ENCODE measurements at regions of chr13 and their contacts with region 1.

Region 1: GRCh38 chr13:44988973-44989817 is at the starts of genes GPALPP1 and NUFIP1:
- DNase-seq: peak; percentile 79 to 96 (median 89)
- ATAC-seq: peak; percentile 98
- H3K4me3 ChIP-seq: peak within 1 kb of the TSS; percentile 83
- H3K4me3 Mint-ChIP-seq: peak within 1 kb of the TSS; percentile 99
- H3K27ac ChIP-seq: peak within 1 kb of the TSS; percentile 75 to 87
- H3K27ac Mint-ChIP-seq: peak within 1 kb of the TSS; percentile 92
- H3K4me1 ChIP-seq: peaks cover 30% of the 10 kb centered on the region
- H3K4me1 Mint-ChIP-seq: peaks cover 65% of the 10 kb centered on the region
- H3K27me3 ChIP-seq: no peaks in the 10 kb centered on the region
- H3K27me3 Mint-ChIP-seq: no peaks in the 10 kb centered on the region
- CTCF ChIP-seq: no peak
- total RNA-seq, gene GPALPP1: 18.9 to 20.8 TPM
- total RNA-seq, gene NUFIP1: 4.3 to 4.4 TPM

Region 2: GRCh38 chr13:44141725-44142539 is 847.3 kb before region 1 on chr13:
- CTCF ChIA-PET with region 1: no interaction called
- POLR2A ChIA-PET with region 1: no interaction called
- intact Hi-C with region 1: loop called in 1 of 2 experiments (anchors 5 kb)
- DNase-seq: peak; percentile 76 to 95 (median 90)
- ATAC-seq: peak; percentile 96
- H3K4me3 ChIP-seq: peak overlapping the region; percentile 84
- H3K4me3 Mint-ChIP-seq: peak overlapping the region; percentile 93
- H3K27ac ChIP-seq: peak overlapping the region; percentile 48 to 76
- H3K27ac Mint-ChIP-seq: peak overlapping the region; percentile 77
- H3K4me1 ChIP-seq: peaks cover 15% of the 10 kb centered on the region
- H3K4me1 Mint-ChIP-seq: peaks cover 16% of the 10 kb centered on the region
- H3K27me3 ChIP-seq: no peaks in the 10 kb centered on the region
- H3K27me3 Mint-ChIP-seq: no peaks in the 10 kb centered on the region
- CTCF ChIP-seq: no peak

Region 3: DNA sequence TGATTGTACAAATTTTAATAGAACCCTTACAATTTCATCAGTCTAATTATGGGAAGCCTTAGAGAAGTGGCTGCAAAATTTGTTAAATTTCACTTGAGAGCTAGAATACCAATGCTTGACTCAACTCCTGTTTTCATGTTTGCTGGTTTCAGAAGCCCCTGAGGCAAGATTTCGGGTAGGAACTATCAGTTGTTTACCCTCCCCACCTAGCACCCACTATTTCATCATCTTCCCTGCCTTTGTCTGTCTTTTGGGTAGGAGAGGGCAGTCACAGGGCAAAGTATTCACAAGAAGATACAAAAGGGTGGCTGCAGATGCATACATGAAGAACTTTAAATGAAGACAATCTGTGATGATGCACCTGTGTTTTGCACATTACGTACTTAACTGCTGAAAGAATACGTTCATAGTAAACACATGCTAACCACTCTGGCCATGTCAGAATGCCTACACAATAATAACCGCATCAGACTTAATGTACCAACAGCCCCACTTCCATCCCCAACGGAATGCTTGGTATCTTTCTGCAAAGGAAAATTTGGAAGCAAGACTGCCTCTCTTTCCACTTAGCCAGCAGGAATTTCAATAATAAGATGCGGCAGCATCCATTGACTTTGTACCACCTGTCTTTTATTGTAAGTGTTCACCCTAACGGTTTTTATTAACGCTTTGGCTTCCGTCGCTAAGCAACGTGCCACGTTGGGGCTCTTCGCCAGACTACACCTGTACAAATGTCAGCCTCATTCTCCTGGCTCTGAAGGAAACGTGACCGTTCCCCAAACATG is 321.3 kb after region 1 on chr13:
- CTCF ChIA-PET with region 1: no interaction called
- POLR2A ChIA-PET with region 1: no interaction called
- intact Hi-C with region 1: loop called in 1 of 2 experiments (anchors 5 kb)
- DNase-seq: no peak
- ATAC-seq: no peak
- H3K4me3 ChIP-seq: peak overlapping the region; percentile 63
- H3K4me3 Mint-ChIP-seq: peak overlapping the region; percentile 85
- H3K27ac ChIP-seq: no peak overlapping the region
- H3K27ac Mint-ChIP-seq: no peak overlapping the region
- H3K4me1 ChIP-seq: peaks cover 24% of the 10 kb centered on the region
- H3K4me1 Mint-ChIP-seq: peaks cover 20% of the 10 kb centered on the region
- H3K27me3 ChIP-seq: no peaks in the 10 kb centered on the region
- H3K27me3 Mint-ChIP-seq: peaks cover 8% of the 10 kb centered on the region
- CTCF ChIP-seq: no peak

Region 4: DNA sequence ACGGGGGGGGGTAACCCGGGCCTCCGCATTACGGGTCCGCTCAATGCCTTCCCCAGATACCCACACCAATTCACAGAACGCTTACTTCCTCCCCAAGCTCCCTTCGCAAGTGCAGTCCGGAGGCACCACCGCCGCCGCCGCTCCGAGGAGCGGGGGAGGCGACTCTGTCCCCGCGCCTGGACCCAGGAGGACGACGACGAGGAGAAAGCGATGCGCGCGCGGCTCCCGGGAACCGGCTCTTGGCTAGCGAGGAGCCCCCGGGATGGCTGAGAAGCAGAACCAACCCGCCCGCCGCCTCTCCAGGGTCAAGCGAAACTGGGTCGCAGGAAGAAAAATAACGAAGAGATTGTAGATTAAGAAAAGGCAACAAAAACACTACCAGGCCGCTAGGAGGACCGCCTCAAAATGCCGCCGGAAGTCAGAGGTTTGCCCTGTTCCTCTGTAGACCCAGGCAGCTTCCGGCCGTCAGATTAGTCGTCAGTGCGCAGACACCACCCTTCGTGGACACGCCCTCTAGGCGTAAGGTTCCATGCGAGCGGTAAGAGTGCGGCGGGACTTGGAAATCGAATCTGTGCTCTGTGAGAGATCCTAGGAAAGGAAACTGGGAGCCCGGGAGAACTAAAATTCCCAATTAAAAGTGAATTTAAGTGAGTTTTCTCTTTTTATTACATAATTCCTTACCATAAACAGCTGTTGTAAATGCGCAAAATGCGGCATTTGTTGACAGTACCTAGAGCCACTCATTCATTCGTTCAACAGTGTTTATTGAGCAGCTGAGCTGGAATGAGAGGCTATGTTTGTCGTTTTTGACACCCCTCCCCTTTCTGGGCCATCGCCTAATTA is 1063.3 kb after region 1 on chr13 and contains the start of gene ZC3H13:
- CTCF ChIA-PET with region 1: no interaction called
- POLR2A ChIA-PET with region 1: no interaction called
- intact Hi-C with region 1: loop called in 1 of 2 experiments (anchors 5 kb)
- DNase-seq: peak; percentile 87 to 98 (median 89)
- ATAC-seq: peak; percentile 96
- H3K4me3 ChIP-seq: peak within 1 kb of the TSS; percentile 84
- H3K4me3 Mint-ChIP-seq: peak within 1 kb of the TSS; percentile 91
- H3K27ac ChIP-seq: peak within 1 kb of the TSS; percentile 97
- H3K27ac Mint-ChIP-seq: peak within 1 kb of the TSS; percentile 86
- H3K4me1 ChIP-seq: peaks cover 2% of the 10 kb centered on the region
- H3K4me1 Mint-ChIP-seq: peaks cover 53% of the 10 kb centered on the region
- H3K27me3 ChIP-seq: peaks cover 0 to 10% of the 10 kb centered on the region in 2 experiments
- H3K27me3 Mint-ChIP-seq: peaks cover 22% of the 10 kb centered on the region
- CTCF ChIP-seq: peak; percentile 48
- total RNA-seq, gene ZC3H13: 36.5 to 43.8 TPM